ENCODE measurements at regions of chr15 and their contacts with region 1.

Region 1: GRCh38 chr15:52480990-52481389 is 47.7 kb downstream of the MYO5A start:
- DNase-seq: no peak
- ATAC-seq: no peak
- H3K4me3 Mint-ChIP-seq: no peak overlapping the region
- H3K27ac Mint-ChIP-seq: peak overlapping the region; percentile 87
- H3K4me1 Mint-ChIP-seq: peaks cover 53% of the 10 kb centered on the region
- H3K27me3 Mint-ChIP-seq: no peaks in the 10 kb centered on the region

Region 2: GRCh38 chr15:52306277-52306676 is 174.7 kb before region 1 on chr15:
- CTCF ChIA-PET with region 1: no interaction called
- DNase-seq: no peak
- ATAC-seq: no peak
- H3K4me3 Mint-ChIP-seq: no peak overlapping the region
- H3K27ac Mint-ChIP-seq: no peak overlapping the region
- H3K4me1 Mint-ChIP-seq: peaks cover 20% of the 10 kb centered on the region
- H3K27me3 Mint-ChIP-seq: no peaks in the 10 kb centered on the region

Region 3: GRCh38 chr15:52331490-52332240 is 149.3 kb before region 1 on chr15:
- CTCF ChIA-PET with region 1: no interaction called
- DNase-seq: peak; percentile 85
- ATAC-seq: peak; percentile 99
- H3K4me3 Mint-ChIP-seq: peak overlapping the region; percentile 24
- H3K27ac Mint-ChIP-seq: peak overlapping the region; percentile 83
- H3K4me1 Mint-ChIP-seq: peaks cover 37% of the 10 kb centered on the region
- H3K27me3 Mint-ChIP-seq: no peaks in the 10 kb centered on the region

Region 4: DNA sequence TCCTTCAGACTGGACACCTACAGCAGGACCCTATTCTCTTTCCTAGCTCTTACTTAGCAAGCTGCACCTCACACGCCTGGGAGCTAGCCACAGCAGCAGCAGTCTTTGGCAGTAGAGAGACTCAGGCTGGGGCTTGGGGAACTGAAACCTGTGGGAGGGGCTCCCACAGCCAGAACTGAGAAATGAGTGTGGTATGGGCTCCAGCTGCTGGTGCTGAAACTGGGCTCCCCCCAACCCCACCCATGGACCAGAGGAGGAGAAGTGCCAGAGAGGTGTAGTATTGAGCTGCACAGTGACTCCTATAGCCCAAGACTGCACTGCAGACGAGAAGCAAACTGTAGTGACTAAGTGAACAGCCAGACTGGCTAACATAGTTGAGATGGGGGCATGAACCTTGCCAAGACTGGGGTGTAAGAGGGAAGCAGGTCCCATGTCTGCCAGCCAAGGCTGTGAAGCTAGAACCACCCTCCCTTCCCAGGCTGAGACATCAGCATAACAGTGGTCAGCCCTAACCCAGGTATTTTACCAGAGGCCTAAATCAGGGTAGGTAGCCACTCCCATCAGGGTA is 14.8 kb before region 1 on chr15:
- CTCF ChIA-PET with region 1: interaction called, 10 read pairs
- DNase-seq: peak; percentile 83
- ATAC-seq: peak; percentile 79
- H3K4me3 Mint-ChIP-seq: no peak overlapping the region
- H3K27ac Mint-ChIP-seq: peak overlapping the region; percentile 73
- H3K4me1 Mint-ChIP-seq: peaks cover 44% of the 10 kb centered on the region
- H3K27me3 Mint-ChIP-seq: no peaks in the 10 kb centered on the region

Region 5: DNA sequence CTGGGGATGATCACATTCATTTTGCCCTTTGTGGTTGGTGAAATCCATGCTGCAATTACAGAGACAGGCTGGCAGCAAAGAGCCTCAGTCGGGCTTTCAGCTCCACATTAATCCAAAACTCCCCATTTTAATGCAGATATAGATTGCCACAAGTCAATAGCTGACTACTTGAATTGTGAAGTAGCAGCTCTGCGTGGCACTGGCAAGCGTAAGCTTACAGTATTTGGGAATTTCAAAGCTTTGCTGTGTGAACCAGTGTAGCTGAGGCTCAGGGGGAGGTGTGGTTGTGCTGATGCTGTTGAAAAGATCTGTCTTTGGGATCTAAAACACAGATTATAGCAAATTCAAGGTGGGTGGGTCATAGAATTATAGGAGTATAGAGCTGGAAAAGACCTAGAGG is 599.5 kb after region 1 on chr15:
- CTCF ChIA-PET with region 1: no interaction called
- DNase-seq: no peak
- ATAC-seq: no peak
- H3K4me3 Mint-ChIP-seq: no peak overlapping the region
- H3K27ac Mint-ChIP-seq: no peak overlapping the region
- H3K4me1 Mint-ChIP-seq: no peaks in the 10 kb centered on the region
- H3K27me3 Mint-ChIP-seq: no peaks in the 10 kb centered on the region

Measured in activated CD8-positive, alpha-beta memory T cell treated with anti-CD3 and anti-CD28 coated beads, Interleukin-2, amount 10 ng/mL, durations not matched to agents 7 days and 5 days (primary cell).